Panc1 (cell line): ENCODE measurements at regions of chr5 and their contacts with region 1.

Region 1: DNA sequence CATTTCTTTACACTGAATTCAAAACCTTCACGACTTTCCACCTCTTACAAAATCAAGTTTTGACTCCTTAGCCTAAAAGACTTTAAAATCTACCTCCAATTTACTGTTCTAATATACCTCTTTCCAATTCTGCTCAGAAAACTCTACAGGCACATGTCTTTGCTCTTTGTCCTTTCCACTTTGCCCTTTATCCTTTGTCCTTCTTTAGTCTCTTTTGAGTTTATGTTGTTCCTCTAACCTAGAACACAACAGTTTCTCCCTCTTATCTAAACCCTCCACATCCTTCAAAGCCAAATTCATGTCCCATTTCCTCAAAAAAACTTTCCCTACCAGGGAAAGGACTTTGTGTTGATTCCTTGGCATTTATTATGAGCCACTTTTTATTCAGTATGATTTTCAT is 1.4 kb downstream of the CDKL3 start:
- DNase-seq: no peak
- ATAC-seq: no peak
- H3K4me3 ChIP-seq: no peak overlapping the region
- H3K27ac ChIP-seq: no peak overlapping the region
- H3K4me1 ChIP-seq: peaks cover 12% of the 10 kb centered on the region
- H3K27me3 ChIP-seq: no peaks in the 10 kb centered on the region
- CTCF ChIP-seq: no peak

Region 2: DNA sequence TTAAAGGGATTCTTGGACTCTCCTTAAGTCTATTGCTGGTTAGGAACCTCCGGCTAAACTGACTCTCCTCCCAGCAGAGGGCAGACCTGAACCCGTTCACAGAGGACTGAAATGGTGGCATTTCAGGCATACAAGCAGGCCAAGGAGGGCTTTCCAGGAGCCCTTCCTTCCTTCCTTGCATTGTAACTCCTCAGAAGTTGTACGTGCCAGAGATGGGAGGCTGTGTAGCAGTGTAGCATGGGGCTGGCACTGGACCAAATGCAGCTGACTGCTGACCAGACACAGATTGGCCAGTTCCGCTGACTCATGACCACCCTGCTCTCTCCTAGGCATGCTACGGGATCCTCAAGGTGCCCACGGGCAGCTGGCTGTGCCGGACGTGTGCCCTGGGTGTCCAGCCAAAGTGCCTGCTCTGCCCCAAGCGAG is 196.3 kb after region 1 on chr5:
- CTCF ChIA-PET with region 1: no interaction called
- POLR2A ChIA-PET with region 1: interaction called, 11 read pairs
- in situ Hi-C with region 1: no loop called
- intact Hi-C with region 1: no loop called
- DNase-seq: no peak
- ATAC-seq: peak; percentile 74; the same call in 1 of the 2 replicates
- H3K4me3 ChIP-seq: no peak overlapping the region
- H3K27ac ChIP-seq: no peak overlapping the region
- H3K4me1 ChIP-seq: no peaks in the 10 kb centered on the region; the same call in 1 of the 2 replicates
- H3K27me3 ChIP-seq: no peaks in the 10 kb centered on the region
- CTCF ChIP-seq: no peak